ENCODE measurements at regions of chr2 and their contacts with region 1.

Region 1: DNA sequence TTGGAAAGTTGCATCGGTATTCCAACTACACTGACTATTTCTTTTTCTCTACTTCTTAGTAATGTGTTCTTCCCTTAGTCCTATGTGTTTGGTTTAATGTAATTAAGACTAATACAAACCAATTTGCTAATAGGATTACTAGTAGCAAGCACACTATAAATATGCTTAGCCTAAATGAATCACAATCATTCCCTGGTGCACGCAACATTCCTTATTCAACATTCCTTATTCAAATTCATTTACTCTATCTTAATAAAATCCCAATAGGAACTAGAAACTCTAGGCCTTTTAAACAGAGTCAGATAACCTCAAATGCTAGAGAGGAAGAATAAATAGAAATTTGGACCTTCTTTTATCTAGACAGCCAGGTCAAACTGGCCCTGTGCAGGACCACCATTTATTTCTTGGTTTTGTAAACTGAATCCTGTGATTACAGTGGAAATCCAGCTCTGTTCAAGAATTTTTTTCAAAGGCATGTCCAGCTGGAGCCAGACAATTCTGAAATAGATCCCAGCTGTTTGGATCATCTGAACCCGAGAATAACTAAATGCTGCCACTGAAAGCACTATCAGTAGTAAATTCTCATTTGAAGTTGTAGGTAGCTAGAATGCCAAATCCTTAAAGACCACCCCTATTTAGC is 103.1 kb downstream of the PPP1R1C start:
- DNase-seq: no peak
- ATAC-seq: no peak
- H3K4me3 ChIP-seq: no peak overlapping the region
- H3K27ac ChIP-seq: no peak overlapping the region
- H3K4me1 ChIP-seq: no peaks in the 10 kb centered on the region
- H3K27me3 ChIP-seq: no peaks in the 10 kb centered on the region
- CTCF ChIP-seq: no peak

Region 2: GRCh38 chr2:181742922-181743722 is 345.7 kb before region 1 on chr2:
- intact Hi-C with region 1: loop called (anchors 10 kb)
- DNase-seq: no peak
- ATAC-seq: peak in 1 of 2 donors; percentile 80
- H3K4me3 ChIP-seq: no peak overlapping the region
- H3K27ac ChIP-seq: no peak overlapping the region
- H3K4me1 ChIP-seq: peaks cover 7% of the 10 kb centered on the region
- H3K27me3 ChIP-seq: no peaks in the 10 kb centered on the region
- CTCF ChIP-seq: peak; percentile 69

Region 3: GRCh38 chr2:181937473-181937872 is 151.3 kb before region 1 on chr2:
- intact Hi-C with region 1: no loop called
- DNase-seq: no peak
- ATAC-seq: peak; percentile 93
- H3K4me3 ChIP-seq: no peak overlapping the region
- H3K27ac ChIP-seq: peak overlapping the region; percentile 44
- H3K4me1 ChIP-seq: peaks cover 11% of the 10 kb centered on the region
- H3K27me3 ChIP-seq: no peaks in the 10 kb centered on the region
- CTCF ChIP-seq: no peak

Region 4: DNA sequence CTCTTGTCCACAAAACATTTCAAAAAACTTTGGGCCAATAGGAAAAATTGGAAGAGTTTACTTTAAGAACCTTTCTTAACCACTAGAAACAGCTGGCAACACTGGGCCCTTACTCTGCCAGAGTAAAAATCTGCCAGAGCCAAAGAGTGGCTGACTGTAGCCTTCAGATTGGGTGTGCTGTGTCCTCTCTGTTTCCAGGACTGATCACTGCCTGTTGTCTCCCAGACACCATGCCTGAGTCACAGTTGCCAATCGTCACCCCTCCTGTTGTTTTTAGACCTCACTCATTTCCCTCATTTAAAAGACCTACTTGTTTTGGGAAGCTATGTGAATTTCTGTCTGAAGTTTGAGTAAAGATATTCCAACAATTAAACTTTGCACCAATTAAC is 56.0 kb after region 1 on chr2:
- intact Hi-C with region 1: no loop called
- DNase-seq: no peak
- ATAC-seq: no peak
- H3K4me3 ChIP-seq: no peak overlapping the region
- H3K27ac ChIP-seq: no peak overlapping the region
- H3K4me1 ChIP-seq: no peaks in the 10 kb centered on the region
- H3K27me3 ChIP-seq: no peaks in the 10 kb centered on the region
- CTCF ChIP-seq: no peak

Region 5: GRCh38 chr2:182229297-182229696 is 140.5 kb after region 1 on chr2:
- intact Hi-C with region 1: no loop called
- DNase-seq: no peak
- ATAC-seq: no peak
- H3K4me3 ChIP-seq: no peak overlapping the region
- H3K27ac ChIP-seq: no peak overlapping the region
- H3K4me1 ChIP-seq: no peaks in the 10 kb centered on the region
- H3K27me3 ChIP-seq: no peaks in the 10 kb centered on the region
- CTCF ChIP-seq: no peak